Activated CD4-positive, alpha-beta T cell treated with anti-CD3 and anti-CD28 coated beads for 36 hours (primary cell): ENCODE measurements at regions of chr6 and their contacts with region 1.

Region 1: DNA sequence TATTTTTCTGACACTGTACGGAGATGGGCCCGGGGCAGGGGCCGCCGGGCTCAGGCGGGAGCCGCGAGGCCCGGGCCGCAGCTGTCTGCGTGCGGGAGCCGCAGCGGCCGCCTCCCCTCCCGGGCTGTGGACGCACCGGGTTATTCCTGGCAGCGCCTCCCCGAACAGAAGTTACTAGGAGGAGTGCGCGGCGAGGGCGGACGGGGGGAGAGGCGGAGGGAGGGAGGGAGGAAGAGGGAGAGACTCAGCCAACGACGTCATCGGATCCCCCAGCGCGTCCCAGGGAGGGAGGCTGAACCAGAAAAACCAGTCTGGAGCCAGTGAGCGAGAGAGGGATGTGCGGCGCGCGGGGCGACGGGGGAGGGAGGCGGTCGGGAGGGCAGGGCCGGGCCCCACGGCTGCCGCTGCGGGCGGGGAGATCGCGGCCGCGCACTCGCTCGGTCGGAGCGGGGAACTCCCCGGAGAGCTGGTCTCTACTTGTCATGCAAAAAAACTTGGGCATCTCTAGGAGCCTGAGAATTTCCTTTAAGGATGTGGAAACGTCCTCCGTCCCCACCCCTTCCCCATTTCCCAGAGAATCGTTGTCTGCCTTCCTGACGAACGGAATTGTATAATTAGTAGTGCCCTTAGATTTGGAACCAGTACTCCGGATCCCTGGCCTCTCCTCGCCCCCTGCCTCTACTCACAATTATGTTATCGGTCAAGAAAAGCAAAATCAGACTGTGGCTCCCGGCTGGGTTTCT is 1.4 kb upstream of the HIVEP2 start:
- DNase-seq: peak; percentile 96
- ATAC-seq: peak; percentile 47
- H3K4me3 Mint-ChIP-seq: peak overlapping the region; percentile 96
- H3K27ac Mint-ChIP-seq: peak overlapping the region; percentile 96
- H3K4me1 Mint-ChIP-seq: peaks cover 27% of the 10 kb centered on the region
- H3K27me3 Mint-ChIP-seq: no peaks in the 10 kb centered on the region

Region 2: GRCh38 chr6:142566628-142567396 is 379.5 kb before region 1 on chr6:
- CTCF ChIA-PET with region 1: no interaction called
- POLR2A ChIA-PET with region 1: no interaction called
- intact Hi-C with region 1: loop called (anchors 1 to 5 kb)
- DNase-seq: peak; percentile 75
- ATAC-seq: peak; percentile 28
- H3K4me3 Mint-ChIP-seq: no peak overlapping the region
- H3K27ac Mint-ChIP-seq: no peak overlapping the region
- H3K4me1 Mint-ChIP-seq: peaks cover 68% of the 10 kb centered on the region
- H3K27me3 Mint-ChIP-seq: no peaks in the 10 kb centered on the region

Region 3: DNA sequence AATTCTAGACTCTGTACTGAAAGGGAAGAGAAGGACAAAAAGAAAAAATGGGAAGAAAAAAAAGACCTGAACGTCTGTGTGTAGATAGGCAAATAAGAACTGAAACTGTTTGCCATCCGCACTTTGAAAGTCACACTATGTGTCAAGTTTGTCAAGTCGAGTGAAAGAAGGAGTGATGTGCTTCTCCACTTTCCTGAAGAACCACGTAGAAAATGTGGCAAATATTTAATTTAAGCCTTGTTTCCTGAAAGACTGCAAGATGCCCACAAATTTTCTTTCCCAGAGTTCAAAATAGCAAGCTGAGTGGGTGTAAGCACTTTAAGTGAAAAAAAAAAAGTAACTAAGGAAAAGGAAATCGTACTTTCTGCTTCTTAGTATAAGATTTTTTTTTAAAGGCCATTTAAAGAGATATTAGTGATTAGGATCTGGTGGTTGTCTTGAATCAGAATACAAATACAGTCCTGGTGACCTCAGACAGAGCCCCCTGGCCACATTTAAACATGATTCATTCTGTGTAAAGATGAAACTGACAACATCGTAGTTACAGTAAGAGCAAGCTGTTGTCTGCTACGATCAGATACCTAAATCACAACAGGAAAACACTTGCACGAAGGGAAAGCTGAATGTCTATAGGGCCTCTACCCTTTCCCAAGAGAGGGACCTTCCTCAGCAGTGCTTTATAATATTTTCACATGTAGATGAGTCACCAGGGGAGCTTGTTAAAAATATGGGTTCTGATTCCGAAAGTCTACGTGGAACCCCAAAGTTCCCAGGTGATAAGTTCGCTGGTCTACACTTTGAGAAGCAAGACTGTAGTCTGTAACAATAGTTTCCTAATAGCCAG is 103.7 kb before region 1 on chr6:
- CTCF ChIA-PET with region 1: interaction called, 3 read pairs
- POLR2A ChIA-PET with region 1: interaction called, 17 read pairs
- intact Hi-C with region 1: loop called (anchors 1 kb)
- DNase-seq: peak; percentile 66
- ATAC-seq: peak; percentile 80
- H3K4me3 Mint-ChIP-seq: peak overlapping the region; percentile 71
- H3K27ac Mint-ChIP-seq: peak overlapping the region; percentile 97
- H3K4me1 Mint-ChIP-seq: peaks cover 89% of the 10 kb centered on the region
- H3K27me3 Mint-ChIP-seq: no peaks in the 10 kb centered on the region

Region 4: DNA sequence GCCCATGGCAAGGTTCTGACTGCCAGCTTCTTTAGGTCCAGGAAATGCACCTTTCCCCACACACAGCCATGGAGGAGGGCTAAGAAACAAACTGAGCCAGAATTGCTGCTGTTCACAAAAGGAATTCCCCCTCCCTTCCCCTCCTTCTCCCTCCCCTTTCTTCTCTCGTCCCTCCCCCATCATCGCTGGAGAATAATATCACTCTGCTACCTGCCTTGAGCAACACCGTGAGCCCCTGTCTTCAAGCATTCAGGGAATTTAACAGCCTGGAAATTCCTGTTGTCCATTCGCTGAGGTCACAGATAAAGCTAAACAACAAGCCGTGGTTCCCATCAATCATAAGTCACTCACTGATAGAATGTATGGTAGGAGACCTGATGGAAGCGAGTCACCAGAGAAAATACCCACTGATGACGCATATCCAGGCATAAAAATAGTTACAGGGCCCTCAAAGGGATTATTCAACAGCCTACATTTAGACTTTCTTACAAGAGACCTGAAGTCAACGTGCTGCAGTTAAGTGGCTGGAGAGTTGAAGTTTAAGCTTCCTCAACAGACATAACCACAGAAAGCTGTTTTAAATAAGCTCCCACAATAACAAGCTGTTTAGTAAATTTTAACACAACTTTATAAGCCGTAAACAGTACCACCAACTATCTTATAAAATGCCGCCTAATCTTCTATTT is 61.0 kb before region 1 on chr6:
- CTCF ChIA-PET with region 1: interaction called, 14 read pairs
- POLR2A ChIA-PET with region 1: interaction called, 4 read pairs
- intact Hi-C with region 1: loop called (anchors 1 kb)
- DNase-seq: peak; percentile 55
- ATAC-seq: peak; percentile 82
- H3K4me3 Mint-ChIP-seq: peak overlapping the region; percentile 76
- H3K27ac Mint-ChIP-seq: peak overlapping the region; percentile 99
- H3K4me1 Mint-ChIP-seq: peaks cover 88% of the 10 kb centered on the region
- H3K27me3 Mint-ChIP-seq: no peaks in the 10 kb centered on the region

Region 5: GRCh38 chr6:142926494-142927270 is 19.7 kb before region 1 on chr6:
- CTCF ChIA-PET with region 1: interaction called, 57 read pairs
- POLR2A ChIA-PET with region 1: interaction called, 10 read pairs
- intact Hi-C with region 1: loop called (anchors 1 kb)
- DNase-seq: peak; percentile 83
- ATAC-seq: peak; percentile 68
- H3K4me3 Mint-ChIP-seq: peak overlapping the region; percentile 92
- H3K27ac Mint-ChIP-seq: peak overlapping the region; percentile 99
- H3K4me1 Mint-ChIP-seq: peaks cover 61% of the 10 kb centered on the region
- H3K27me3 Mint-ChIP-seq: no peaks in the 10 kb centered on the region

Region 6: GRCh38 chr6:143136647-143137046 is 190.3 kb after region 1 on chr6:
- CTCF ChIA-PET with region 1: no interaction called
- POLR2A ChIA-PET with region 1: no interaction called
- intact Hi-C with region 1: loop called (anchors 1 to 10 kb)
- DNase-seq: no peak
- ATAC-seq: no peak
- H3K4me3 Mint-ChIP-seq: no peak overlapping the region
- H3K27ac Mint-ChIP-seq: peak overlapping the region; percentile 78
- H3K4me1 Mint-ChIP-seq: peaks cover 52% of the 10 kb centered on the region
- H3K27me3 Mint-ChIP-seq: no peaks in the 10 kb centered on the region